ENCODE measurements at regions of chr9 and their contacts with region 1.

Region 1: GRCh38 chr9:34123682-34124081 is 2.8 kb downstream of the DCAF12 start:
- DNase-seq: no peak
- H3K4me3 ChIP-seq: no peak overlapping the region
- H3K27ac ChIP-seq: no peak overlapping the region
- H3K4me1 ChIP-seq: peaks cover 21% of the 10 kb centered on the region
- H3K27me3 ChIP-seq: no peaks in the 10 kb centered on the region

Region 2: DNA sequence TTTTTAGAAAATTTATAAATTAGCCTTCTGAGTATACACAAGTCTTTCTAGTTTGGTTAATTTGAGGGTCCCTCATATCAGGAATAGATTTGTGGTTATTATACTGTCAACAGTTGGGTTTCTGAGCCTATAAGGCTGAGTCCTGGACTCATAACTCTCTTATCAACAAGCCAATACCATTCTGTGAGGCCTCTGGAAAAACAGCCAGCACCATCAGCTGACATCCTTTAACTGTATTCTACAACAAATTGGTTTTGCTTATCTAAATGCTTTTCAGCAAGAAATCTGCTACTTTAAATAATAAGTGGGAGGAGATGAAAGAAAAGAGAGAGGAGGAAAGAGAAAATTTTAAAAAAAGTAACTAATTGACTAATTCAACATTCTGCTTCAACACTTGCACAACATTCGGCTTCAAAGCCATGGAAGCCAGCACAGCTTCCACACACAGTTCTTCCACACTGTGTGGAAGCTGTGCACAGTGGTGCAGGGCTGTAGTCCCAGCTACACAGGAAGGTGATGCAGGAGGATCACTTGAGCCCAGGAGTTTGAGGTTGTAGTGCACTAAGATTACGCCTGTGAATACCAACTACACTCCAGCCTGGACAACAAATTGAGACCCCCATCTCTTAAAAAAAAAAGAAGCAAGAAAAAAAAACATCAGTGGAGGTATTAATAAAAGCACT is 159.5 kb before region 1 on chr9:
- in situ Hi-C with region 1: no loop called
- DNase-seq: no peak
- H3K4me3 ChIP-seq: no peak overlapping the region
- H3K27ac ChIP-seq: no peak overlapping the region
- H3K4me1 ChIP-seq: no peaks in the 10 kb centered on the region
- H3K27me3 ChIP-seq: no peaks in the 10 kb centered on the region

Region 3: GRCh38 chr9:34233672-34234071 is 110.0 kb after region 1 on chr9:
- in situ Hi-C with region 1: loop called (anchors 25 kb)
- DNase-seq: peak; percentile 74
- H3K4me3 ChIP-seq: no peak overlapping the region
- H3K27ac ChIP-seq: peak overlapping the region; percentile 29
- H3K4me1 ChIP-seq: peaks cover 18% of the 10 kb centered on the region
- H3K27me3 ChIP-seq: no peaks in the 10 kb centered on the region

Measured in GM23248 (cell line).